Left ventricle myocardium superior (tissue), 1 donor: ENCODE measurements at regions of chr3 and their contacts with region 1.

Region 1: DNA sequence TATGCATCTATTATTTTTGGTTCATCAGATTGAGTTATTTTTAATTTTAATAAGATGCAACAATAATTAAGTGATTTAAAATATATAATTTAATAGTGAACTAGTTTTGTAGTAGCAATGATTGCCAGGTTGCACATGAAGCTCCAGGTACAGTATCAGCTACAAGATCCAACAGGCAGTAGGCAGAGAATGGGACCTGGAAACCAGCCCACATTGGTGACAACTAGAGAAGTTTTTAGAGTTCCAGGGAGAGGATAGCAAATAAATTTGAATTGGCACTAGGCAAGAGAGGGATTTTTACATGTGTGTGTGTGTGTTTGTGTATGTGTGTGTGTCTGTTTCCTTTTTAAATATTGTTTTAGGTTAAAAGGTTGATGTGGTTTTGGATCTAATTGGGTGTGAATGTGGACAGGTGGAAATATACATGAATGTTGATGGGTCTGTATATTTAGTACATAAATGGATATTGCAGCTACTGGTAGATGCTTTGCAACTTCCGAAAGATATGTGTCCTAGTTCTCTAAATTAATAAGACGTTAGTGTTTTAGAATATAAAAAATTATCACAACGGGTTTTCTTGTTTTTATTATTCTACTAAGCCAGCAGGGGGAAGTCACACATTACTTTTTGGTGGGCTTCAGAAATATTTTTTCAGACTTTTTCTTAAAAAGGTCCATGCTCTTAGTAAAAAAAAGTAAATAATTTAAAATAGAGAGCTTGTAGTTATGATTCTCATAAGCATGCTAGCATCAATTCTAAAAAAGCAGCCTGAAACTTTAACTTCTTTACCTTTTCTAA is 110.1 kb upstream of the GBE1 start:
- DNase-seq: no peak
- ATAC-seq: no peak

Region 2: GRCh38 chr3:82133070-82133606 is 261.6 kb after region 1 on chr3:
- intact Hi-C with region 1: loop called (anchors 5 kb)
- DNase-seq: peak; percentile 65
- ATAC-seq: peak; percentile 76